ENCODE measurements at regions of chr20 and their contacts with region 1.

Region 1: DNA sequence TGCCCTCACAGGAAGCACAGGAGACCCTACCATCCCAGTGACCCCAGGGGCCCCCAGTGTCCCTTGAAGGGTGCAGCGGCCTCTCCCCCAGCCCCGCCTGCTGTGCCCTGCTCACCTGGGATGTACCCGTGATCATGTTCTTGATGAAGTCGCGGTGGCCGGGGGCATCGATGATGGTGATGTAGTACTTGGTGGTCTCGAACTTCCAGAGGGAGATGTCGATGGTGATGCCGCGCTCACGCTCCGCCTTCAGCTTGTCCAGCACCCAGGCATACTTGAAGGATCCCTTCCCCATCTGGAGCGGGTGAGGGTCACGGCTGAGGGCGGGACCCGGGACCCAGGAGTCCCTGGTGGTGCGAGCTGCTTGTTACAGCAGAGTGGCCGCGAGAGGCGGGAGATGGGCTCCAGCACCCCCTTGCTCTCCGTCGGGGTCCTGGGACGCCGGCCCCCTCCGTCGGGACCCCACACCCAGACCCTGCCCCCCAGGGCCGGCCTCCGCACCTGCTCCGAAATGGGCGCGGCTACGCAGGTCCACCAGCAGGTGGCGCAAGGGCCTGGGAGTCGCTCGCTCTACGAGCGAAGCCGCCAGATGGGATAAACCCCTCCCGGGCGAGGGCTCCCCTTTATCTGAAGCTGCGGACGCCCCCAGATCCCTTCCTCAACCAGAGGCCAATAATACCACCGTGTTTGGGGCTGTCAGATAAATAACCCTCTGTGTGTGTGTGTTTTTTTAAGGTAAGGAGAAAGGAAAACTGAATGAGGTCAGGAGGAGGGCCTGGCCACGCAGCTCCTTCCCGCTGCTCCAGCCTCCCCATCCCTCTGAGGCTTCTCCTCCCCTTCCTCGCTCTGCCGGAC is 2.9 kb downstream of the EEF1A2 start:
- DNase-seq: peak; percentile 78
- ATAC-seq: peak; percentile 82
- H3K4me3 Mint-ChIP-seq: no peak overlapping the region
- H3K27ac Mint-ChIP-seq: no peak overlapping the region
- H3K4me1 Mint-ChIP-seq: no peaks in the 10 kb centered on the region
- H3K27me3 Mint-ChIP-seq: peaks cover 12% of the 10 kb centered on the region
- CTCF ChIP-seq: peak; percentile 99

Region 2: DNA sequence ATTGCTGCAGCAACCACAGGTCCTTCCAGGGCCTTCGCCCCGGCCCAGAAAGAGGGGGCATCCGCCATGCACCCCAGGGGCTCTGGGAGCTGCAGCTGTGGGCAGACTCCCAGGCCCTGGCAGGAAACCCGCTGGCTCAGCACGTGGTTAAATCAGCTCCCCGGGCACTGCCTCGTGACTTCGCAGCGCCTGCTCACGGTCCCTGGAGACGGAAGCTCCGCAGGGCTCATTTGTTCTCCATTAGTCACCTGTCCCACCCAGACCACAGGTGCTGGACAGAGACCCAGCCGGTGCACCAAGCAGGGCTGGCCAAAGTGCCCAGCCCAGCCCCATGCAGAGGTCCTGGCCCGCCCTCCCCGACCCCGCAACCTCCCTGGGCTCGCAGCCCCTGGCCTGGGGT is 38.2 kb before region 1 on chr20:
- CTCF ChIA-PET with region 1: no interaction called
- POLR2A ChIA-PET with region 1: no interaction called
- intact Hi-C with region 1: no loop called
- DNase-seq: peak; percentile 20
- ATAC-seq: peak; percentile 46
- H3K4me3 Mint-ChIP-seq: no peak overlapping the region
- H3K27ac Mint-ChIP-seq: no peak overlapping the region
- H3K4me1 Mint-ChIP-seq: no peaks in the 10 kb centered on the region
- H3K27me3 Mint-ChIP-seq: peaks cover 23% of the 10 kb centered on the region
- CTCF ChIP-seq: no peak

Region 3: GRCh38 chr20:63520504-63520933 is 24.6 kb after region 1 on chr20 and contains the start of gene PPDPF:
- CTCF ChIA-PET with region 1: interaction called, 22 read pairs
- POLR2A ChIA-PET with region 1: interaction called, 5 read pairs
- intact Hi-C with region 1: no loop called
- DNase-seq: peak; percentile 85
- ATAC-seq: peak; percentile 88
- H3K4me3 Mint-ChIP-seq: peak within 1 kb of the TSS; percentile 78
- H3K27ac Mint-ChIP-seq: peak within 1 kb of the TSS; percentile 77
- H3K4me1 Mint-ChIP-seq: peaks cover 11% of the 10 kb centered on the region
- H3K27me3 Mint-ChIP-seq: no peaks in the 10 kb centered on the region
- CTCF ChIP-seq: no peak
- total RNA-seq, gene PPDPF: 193 to 226 TPM